PC-9 (cell line): ENCODE measurements at regions of chr13 and their contacts with region 1.

Region 1: DNA sequence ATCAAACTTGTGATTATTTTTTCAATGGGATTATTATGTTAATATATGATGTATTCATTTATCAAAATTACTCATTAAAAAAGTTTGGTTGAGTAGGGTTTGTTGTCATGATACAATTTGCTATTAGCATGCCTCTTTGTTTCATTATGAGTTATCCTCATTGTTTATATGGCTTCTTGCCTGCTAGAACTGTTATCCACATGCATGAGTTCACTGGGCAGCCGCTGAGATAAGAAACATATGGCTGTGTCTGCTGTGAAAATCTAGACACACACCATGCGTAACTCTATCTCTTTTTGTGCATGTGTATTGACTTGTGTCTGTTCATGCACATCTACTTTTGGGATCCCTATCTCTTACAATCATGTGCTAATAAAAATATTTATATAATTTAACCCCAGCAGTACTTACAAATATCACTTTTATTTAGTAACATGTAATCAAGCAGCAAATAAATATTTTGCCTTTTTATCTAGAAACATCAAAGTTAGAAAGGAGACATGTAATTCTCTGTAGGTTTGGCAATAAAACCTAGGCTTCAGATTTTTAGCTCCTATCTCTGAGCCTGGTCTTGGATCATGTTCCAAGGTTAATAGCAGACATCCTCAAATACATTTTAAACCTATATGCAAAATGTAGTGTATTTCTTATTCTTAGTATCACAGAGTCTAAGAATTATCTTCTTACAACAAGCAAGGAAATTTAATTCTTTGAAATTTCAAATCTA is 11.2 kb upstream of the KLF12 start:
- DNase-seq: no peak
- H3K4me3 ChIP-seq: no peak overlapping the region
- H3K27ac ChIP-seq: no peak overlapping the region
- H3K4me1 ChIP-seq: no peaks in the 10 kb centered on the region
- H3K27me3 ChIP-seq: no peaks in the 10 kb centered on the region
- CTCF ChIP-seq: no peak

Region 2: DNA sequence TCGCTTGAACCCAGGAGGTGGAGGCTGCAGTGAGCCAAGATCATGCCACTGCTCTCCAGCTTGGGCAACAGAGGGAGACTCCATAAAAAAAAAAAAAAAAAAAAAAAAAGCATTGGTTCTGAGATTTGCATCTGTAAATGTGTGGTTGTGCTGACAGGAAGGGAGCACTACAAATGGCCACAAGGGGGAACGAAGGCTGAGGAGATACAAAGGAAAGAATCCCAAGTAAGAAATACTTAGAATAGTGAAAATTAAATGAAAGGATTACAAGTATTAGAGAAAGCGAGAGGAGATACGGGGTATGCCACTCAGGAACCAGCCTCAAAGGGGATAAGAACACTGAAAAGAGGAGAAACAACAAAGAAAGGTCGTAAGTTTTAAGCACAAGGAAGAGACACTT is 296.1 kb before region 1 on chr13:
- CTCF ChIA-PET with region 1: interaction called, 13 read pairs
- POLR2A ChIA-PET with region 1: no interaction called
- intact Hi-C with region 1: no loop called
- DNase-seq: peak in 1 of 2 experiments; percentile 11
- H3K4me3 ChIP-seq: no peak overlapping the region
- H3K27ac ChIP-seq: no peak overlapping the region
- H3K4me1 ChIP-seq: no peaks in the 10 kb centered on the region
- H3K27me3 ChIP-seq: no peaks in the 10 kb centered on the region
- CTCF ChIP-seq: peak; percentile 49